Sigmoid colon (tissue), 7 donors: ENCODE measurements at regions of chr5 and their contacts with region 1.

Region 1: GRCh38 chr5:154189819-154190594 is 526 bp upstream of the GALNT10 start:
- DNase-seq: peak; percentile 93
- H3K4me3 ChIP-seq: peak overlapping the region; percentile 56 to 96 (median 74)
- H3K27ac ChIP-seq: peak overlapping the region; percentile 76 to 89 (median 83)
- H3K4me1 ChIP-seq: peaks cover 0 to 53% (median 42%) of the 10 kb centered on the region in 4 donors
- H3K27me3 ChIP-seq: no peaks in the 10 kb centered on the region
- CTCF ChIP-seq: peak in 2 of 4 experiments; percentile 13 to 40
- EP300 ChIP-seq: no peak
- POLR2A ChIP-seq: no peak

Region 2: GRCh38 chr5:154298065-154298464 is 108.1 kb after region 1 on chr5:
- intact Hi-C with region 1: loop called (anchors 10 kb)
- DNase-seq: no peak
- H3K4me3 ChIP-seq: no peak overlapping the region
- H3K27ac ChIP-seq: no peak overlapping the region
- H3K4me1 ChIP-seq: peaks cover 0 to 16% (median 12%) of the 10 kb centered on the region in 4 donors
- H3K27me3 ChIP-seq: no peaks in the 10 kb centered on the region
- CTCF ChIP-seq: no peak
- EP300 ChIP-seq: no peak
- POLR2A ChIP-seq: no peak

Region 3: DNA sequence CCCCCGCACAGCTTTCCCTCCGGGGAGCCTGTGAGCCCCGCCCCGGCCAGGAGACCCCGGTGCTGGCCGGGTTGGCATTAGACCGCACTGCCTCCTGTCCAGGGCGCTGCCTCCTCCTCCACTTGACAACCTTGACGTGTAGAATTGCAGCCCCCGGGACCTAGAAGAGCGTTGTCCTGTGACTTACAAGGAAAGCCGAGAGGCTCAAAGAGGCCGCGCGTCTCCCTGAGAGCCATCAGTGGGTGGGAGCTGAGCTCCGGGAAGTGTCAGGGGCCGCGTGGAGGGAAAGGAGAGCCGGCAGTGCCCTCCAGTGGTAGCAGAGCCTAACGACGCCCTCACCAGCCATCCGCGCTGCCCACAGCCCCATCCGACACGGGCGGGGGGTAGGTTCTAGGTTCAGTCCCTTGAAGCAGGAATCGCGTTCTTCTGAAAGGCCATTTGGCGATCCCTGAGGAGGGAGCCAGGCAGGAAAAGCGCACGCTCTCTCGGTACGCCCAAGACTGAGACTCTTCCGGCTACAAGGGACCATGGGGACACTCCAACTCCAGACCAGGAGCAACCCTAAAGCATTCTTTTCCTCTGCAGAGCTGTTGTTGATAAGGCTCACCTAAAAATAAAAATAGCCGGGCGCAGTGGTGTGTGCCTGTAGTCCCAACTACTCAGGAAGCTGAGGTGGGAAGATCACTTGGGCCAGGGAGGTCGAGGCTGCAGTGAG is 215.2 kb after region 1 on chr5:
- intact Hi-C with region 1: loop called (anchors 1 kb)
- DNase-seq: peak; percentile 90
- H3K4me3 ChIP-seq: peak overlapping the region in 3 of 4 donors; percentile 17 to 46 (median 38)
- H3K27ac ChIP-seq: peak overlapping the region in 1 of 4 donors; percentile 32
- H3K4me1 ChIP-seq: peaks cover 0 to 16% (median 12%) of the 10 kb centered on the region in 4 donors
- H3K27me3 ChIP-seq: no peaks in the 10 kb centered on the region
- CTCF ChIP-seq: peak; percentile 80 to 91 (median 81)
- EP300 ChIP-seq: no peak
- POLR2A ChIP-seq: no peak